CD4-positive, alpha-beta memory T cell (primary cell): ENCODE measurements at regions of chr15 and their contacts with region 1.

Region 1: GRCh38 chr15:31472636-31473384 is 146.2 kb downstream of the KLF13 start:
- DNase-seq: peak; percentile 56 to 69 (median 62)
- H3K4me3 ChIP-seq: peak overlapping the region; percentile 12 to 41
- H3K4me3 Mint-ChIP-seq: peak overlapping the region; percentile 60 to 89 (median 79)
- H3K27ac ChIP-seq: peak overlapping the region; percentile 51
- H3K27ac Mint-ChIP-seq: peak overlapping the region; percentile 80 to 96 (median 94)
- H3K4me1 ChIP-seq: peaks cover 42% of the 10 kb centered on the region
- H3K4me1 Mint-ChIP-seq: peaks cover 31 to 57% (median 47%) of the 10 kb centered on the region in 4 donors
- H3K27me3 ChIP-seq: no peaks in the 10 kb centered on the region
- H3K27me3 Mint-ChIP-seq: no peaks in the 10 kb centered on the region

Region 2: DNA sequence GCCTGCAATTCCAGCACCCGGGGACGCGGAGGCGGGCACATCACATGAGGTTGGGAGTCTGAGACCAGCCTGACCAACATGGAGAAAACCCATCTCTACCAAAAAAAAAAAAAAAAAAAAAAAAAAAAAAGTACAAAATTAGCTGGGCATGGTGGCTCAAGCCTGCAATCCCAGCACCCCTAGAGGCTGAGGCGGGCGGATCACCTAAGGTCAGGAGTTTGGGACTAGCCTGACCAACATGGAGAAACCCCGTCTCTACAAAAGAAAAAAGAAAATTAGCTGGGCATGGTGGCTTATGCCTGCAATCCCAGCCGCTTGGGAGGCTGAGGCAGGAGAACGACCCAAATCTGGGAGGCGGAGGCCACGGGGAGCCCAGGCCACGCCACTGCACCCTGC is 576.6 kb before region 1 on chr15:
- CTCF ChIA-PET with region 1: no interaction called
- POLR2A ChIA-PET with region 1: no interaction called
- intact Hi-C with region 1: no loop called
- DNase-seq: no peak
- H3K4me3 ChIP-seq: no peak overlapping the region
- H3K4me3 Mint-ChIP-seq: no peak overlapping the region
- H3K27ac ChIP-seq: no peak overlapping the region
- H3K27ac Mint-ChIP-seq: no peak overlapping the region
- H3K4me1 ChIP-seq: no peaks in the 10 kb centered on the region
- H3K4me1 Mint-ChIP-seq: no peaks in the 10 kb centered on the region
- H3K27me3 ChIP-seq: no peaks in the 10 kb centered on the region
- H3K27me3 Mint-ChIP-seq: peaks cover 0 to 6% of the 10 kb centered on the region in 2 donors

Region 3: GRCh38 chr15:31381801-31382712 is 90.8 kb before region 1 on chr15:
- CTCF ChIA-PET with region 1: no interaction called
- POLR2A ChIA-PET with region 1: interaction called, 10 read pairs
- intact Hi-C with region 1: no loop called
- DNase-seq: no peak
- H3K4me3 ChIP-seq: no peak overlapping the region
- H3K4me3 Mint-ChIP-seq: no peak overlapping the region
- H3K27ac ChIP-seq: no peak overlapping the region
- H3K27ac Mint-ChIP-seq: peak overlapping the region; percentile 54 to 82 (median 78)
- H3K4me1 ChIP-seq: peaks cover 38% of the 10 kb centered on the region
- H3K4me1 Mint-ChIP-seq: peaks cover 33 to 63% (median 45%) of the 10 kb centered on the region in 4 donors
- H3K27me3 ChIP-seq: no peaks in the 10 kb centered on the region
- H3K27me3 Mint-ChIP-seq: no peaks in the 10 kb centered on the region

Region 4: DNA sequence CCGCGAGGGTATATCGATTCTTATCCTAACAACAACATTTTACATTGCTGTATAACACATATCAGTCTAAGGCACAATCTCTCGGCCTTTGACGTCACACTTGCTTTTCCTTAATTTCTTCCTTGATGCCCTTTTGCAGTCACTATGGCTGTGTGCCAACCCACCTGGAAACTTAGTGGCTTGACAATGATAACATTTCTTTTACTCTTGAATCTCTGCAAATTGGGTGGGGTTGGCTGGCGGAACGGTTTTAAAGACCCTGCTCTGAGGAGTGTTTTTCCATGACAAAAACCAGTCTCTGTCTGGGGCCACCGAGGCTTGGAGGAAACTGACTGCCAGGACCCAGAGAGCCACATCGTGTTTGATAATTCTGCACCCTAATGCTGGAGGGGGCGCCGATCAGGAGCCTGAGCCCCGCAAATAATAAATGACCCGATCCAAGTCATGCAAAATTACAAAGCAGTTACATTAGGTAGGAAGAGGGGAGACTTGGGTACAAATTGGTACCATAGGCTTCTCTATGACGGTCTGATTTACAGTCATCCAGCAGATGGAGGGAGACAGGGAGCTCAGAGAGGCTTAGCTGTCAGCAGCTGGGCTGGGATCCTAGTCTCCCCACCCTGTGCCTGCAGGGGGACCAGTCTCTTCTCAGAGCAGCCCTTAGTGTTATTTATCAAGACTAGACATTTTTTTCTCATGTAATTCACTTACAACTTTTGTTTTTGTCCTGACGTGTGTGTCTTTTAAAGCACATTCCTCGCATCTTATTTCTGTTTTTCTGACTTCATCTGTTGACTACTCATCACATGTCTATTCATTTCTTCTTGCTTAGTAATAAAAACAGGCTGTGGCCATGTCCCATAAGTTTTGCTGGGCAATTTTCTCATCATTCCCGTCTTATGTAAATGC is 30.4 kb before region 1 on chr15:
- CTCF ChIA-PET with region 1: interaction called, 50 read pairs
- POLR2A ChIA-PET with region 1: interaction called, 96 read pairs
- intact Hi-C with region 1: no loop called
- DNase-seq: no peak
- H3K4me3 ChIP-seq: no peak overlapping the region
- H3K4me3 Mint-ChIP-seq: peak overlapping the region; percentile 63 to 75 (median 69)
- H3K27ac ChIP-seq: no peak overlapping the region
- H3K27ac Mint-ChIP-seq: peak overlapping the region in 5 of 7 donors; percentile 63 to 88 (median 68)
- H3K4me1 ChIP-seq: peaks cover 41% of the 10 kb centered on the region
- H3K4me1 Mint-ChIP-seq: peaks cover 27 to 56% (median 37%) of the 10 kb centered on the region in 4 donors
- H3K27me3 ChIP-seq: no peaks in the 10 kb centered on the region
- H3K27me3 Mint-ChIP-seq: no peaks in the 10 kb centered on the region

Region 5: GRCh38 chr15:31458591-31459399 is 14.0 kb before region 1 on chr15:
- CTCF ChIA-PET with region 1: interaction called, 19 read pairs
- POLR2A ChIA-PET with region 1: interaction called, 7 read pairs
- intact Hi-C with region 1: no loop called
- DNase-seq: peak in 2 of 5 donors; percentile 27 to 65
- H3K4me3 ChIP-seq: no peak overlapping the region
- H3K4me3 Mint-ChIP-seq: peak overlapping the region in 3 of 8 donors; percentile 9 to 25 (median 11)
- H3K27ac ChIP-seq: no peak overlapping the region
- H3K27ac Mint-ChIP-seq: peak overlapping the region in 6 of 7 donors; percentile 1 to 55 (median 19)
- H3K4me1 ChIP-seq: peaks cover 19% of the 10 kb centered on the region
- H3K4me1 Mint-ChIP-seq: peaks cover 15 to 27% (median 19%) of the 10 kb centered on the region in 4 donors
- H3K27me3 ChIP-seq: no peaks in the 10 kb centered on the region
- H3K27me3 Mint-ChIP-seq: no peaks in the 10 kb centered on the region

Region 6: GRCh38 chr15:31497838-31498237 is 25.0 kb after region 1 on chr15:
- CTCF ChIA-PET with region 1: no interaction called
- POLR2A ChIA-PET with region 1: no interaction called
- intact Hi-C with region 1: no loop called
- DNase-seq: no peak
- H3K4me3 ChIP-seq: no peak overlapping the region
- H3K4me3 Mint-ChIP-seq: no peak overlapping the region
- H3K27ac ChIP-seq: no peak overlapping the region
- H3K27ac Mint-ChIP-seq: no peak overlapping the region
- H3K4me1 ChIP-seq: no peaks in the 10 kb centered on the region
- H3K4me1 Mint-ChIP-seq: peaks cover 0 to 2% (median under 1%) of the 10 kb centered on the region in 4 donors
- H3K27me3 ChIP-seq: no peaks in the 10 kb centered on the region
- H3K27me3 Mint-ChIP-seq: no peaks in the 10 kb centered on the region